Activated CD4-positive, alpha-beta T cell treated with anti-CD3 and anti-CD28 coated beads for 36 hours (primary cell): ENCODE measurements at regions of chr7 and their contacts with region 1.

Region 1: GRCh38 chr7:140517546-140518369 is 38.5 kb upstream of the MKRN1 start:
- DNase-seq: peak; percentile 86
- ATAC-seq: peak; percentile 91
- H3K4me3 Mint-ChIP-seq: no peak overlapping the region
- H3K27ac Mint-ChIP-seq: no peak overlapping the region
- H3K4me1 Mint-ChIP-seq: peaks cover 3% of the 10 kb centered on the region
- H3K27me3 Mint-ChIP-seq: peaks cover 6% of the 10 kb centered on the region

Region 2: DNA sequence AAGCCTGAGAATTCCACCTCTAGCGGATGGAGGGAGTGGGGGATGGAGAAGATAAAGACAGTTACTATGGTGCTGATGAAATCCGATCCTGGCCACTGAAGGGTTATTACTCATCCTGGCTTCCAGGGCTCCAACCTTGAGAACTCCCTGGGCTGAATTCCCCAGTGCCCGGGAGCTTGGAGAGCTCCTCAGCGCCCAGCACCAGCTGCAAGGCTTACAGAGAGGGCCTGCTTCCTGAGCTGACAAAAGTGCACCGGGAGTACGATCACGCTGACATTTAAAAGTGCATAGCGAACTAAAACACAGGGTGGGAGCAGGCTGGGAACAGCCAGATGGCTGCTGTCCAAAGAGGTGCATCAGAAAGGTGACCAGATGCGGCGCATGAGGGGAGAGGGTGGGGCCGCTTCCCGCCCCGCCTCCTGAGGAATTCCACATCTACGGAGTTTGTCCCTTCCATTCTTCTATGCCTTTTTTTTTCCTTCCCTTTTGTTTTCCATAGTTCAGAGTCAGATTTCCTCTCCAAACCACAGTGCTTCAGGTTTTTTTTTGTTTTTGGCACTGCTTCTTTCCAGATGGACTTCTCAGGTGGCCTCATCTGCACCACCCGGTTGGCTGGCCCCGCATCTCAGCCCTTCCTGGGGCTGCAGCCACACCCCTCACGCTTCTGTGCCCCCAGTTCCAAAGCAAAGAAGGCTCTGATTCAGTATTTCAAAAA is 23.9 kb after region 1 on chr7:
- CTCF ChIA-PET with region 1: no interaction called
- POLR2A ChIA-PET with region 1: no interaction called
- intact Hi-C with region 1: no loop called
- DNase-seq: no peak
- ATAC-seq: no peak
- H3K4me3 Mint-ChIP-seq: no peak overlapping the region
- H3K27ac Mint-ChIP-seq: no peak overlapping the region
- H3K4me1 Mint-ChIP-seq: no peaks in the 10 kb centered on the region
- H3K27me3 Mint-ChIP-seq: no peaks in the 10 kb centered on the region

Region 3: GRCh38 chr7:140609646-140610045 is 91.9 kb after region 1 on chr7:
- CTCF ChIA-PET with region 1: interaction called, 3 read pairs
- POLR2A ChIA-PET with region 1: interaction called, 12 read pairs
- intact Hi-C with region 1: no loop called
- DNase-seq: no peak
- ATAC-seq: no peak
- H3K4me3 Mint-ChIP-seq: no peak overlapping the region
- H3K27ac Mint-ChIP-seq: no peak overlapping the region
- H3K4me1 Mint-ChIP-seq: no peaks in the 10 kb centered on the region
- H3K27me3 Mint-ChIP-seq: peaks cover 2% of the 10 kb centered on the region

Region 4: DNA sequence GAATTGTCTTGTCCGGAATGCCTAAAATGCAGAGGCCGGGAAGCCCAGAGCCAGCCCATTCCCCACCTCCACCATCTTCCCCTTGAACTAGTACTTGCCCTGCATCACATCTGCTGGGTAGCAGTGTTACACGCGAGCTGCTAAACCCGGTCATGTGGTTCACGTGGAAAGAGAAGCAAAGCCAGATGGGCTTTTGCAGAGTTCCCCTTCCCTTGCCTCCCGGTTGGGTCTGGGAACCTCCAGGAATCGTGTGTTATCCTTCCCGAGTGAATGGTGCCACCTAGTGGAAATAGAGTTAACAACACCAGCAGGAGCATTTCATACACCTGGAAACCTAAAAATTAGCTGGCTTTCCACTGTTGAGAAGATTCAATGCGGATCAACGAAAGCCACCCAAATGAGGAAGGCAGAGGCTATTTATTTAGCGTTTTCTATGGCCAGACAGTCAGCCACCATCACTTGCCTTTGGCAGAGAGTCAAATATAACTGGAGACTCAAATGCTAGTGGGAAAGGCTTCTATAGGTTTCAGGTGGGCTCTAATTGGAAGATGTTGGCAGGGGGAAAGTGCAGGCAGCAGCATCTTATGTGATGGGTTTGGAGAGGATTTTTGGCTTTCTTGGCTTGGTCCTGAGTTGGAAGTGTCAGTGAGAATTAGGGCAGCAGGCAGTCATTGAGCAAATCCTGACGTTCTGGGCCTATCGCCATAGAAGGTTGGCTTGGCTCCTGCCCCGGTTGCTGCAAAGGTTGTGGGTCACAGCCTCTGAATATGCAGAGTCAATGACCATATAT is 135.8 kb after region 1 on chr7:
- CTCF ChIA-PET with region 1: interaction called, 26 read pairs
- POLR2A ChIA-PET with region 1: no interaction called
- intact Hi-C with region 1: loop called (anchors 1 kb)
- DNase-seq: peak; percentile 46
- ATAC-seq: peak; percentile 63
- H3K4me3 Mint-ChIP-seq: no peak overlapping the region
- H3K27ac Mint-ChIP-seq: no peak overlapping the region
- H3K4me1 Mint-ChIP-seq: peaks cover 14% of the 10 kb centered on the region
- H3K27me3 Mint-ChIP-seq: peaks cover 14% of the 10 kb centered on the region

Region 5: DNA sequence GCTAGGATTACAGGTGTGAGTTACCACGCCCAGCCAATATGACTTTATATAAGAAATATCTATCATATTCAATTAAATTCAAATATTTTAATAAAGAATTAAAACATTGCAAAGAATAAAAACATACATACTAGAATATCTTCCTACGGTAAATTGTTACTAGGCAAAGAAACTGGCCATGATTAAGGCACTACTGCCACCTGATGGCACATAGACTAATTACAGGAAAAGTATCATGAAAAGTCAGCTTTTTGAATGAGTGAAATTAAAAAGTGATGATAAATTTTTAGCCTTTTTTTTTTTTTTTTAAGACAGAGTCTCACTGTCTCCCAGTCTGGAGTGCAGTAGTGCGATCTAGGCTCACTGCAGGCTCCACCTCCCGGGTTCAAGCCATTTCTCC is 466.0 kb after region 1 on chr7:
- CTCF ChIA-PET with region 1: interaction called, 10 read pairs
- POLR2A ChIA-PET with region 1: no interaction called
- intact Hi-C with region 1: no loop called
- DNase-seq: no peak
- ATAC-seq: no peak
- H3K4me3 Mint-ChIP-seq: no peak overlapping the region
- H3K27ac Mint-ChIP-seq: no peak overlapping the region
- H3K4me1 Mint-ChIP-seq: no peaks in the 10 kb centered on the region
- H3K27me3 Mint-ChIP-seq: peaks cover 2% of the 10 kb centered on the region